ENCODE measurements at regions of chr13 and their contacts with region 1.

Region 1: DNA sequence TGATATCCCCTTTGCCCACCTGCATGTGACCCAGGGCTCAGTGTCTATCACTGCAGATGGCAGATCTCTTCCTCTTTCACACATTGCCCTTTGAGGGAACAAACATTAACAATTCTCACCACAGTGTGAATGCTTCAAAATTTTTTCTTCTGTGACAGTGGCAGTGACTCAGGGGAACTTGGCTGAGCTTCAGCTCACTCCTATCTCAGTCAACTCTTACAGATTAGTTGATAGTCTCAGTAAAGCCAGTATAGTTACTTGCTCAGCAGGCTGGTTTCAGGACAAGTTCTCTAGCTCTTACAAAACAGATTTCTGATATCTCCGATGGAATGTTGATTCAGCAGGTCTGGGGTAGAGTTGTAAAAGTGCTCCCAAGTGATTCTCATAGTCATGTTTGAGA is 166.9 kb downstream of the DLEU7 start:
- DNase-seq: peak in 2 of 3 donors; percentile 11 to 22
- H3K4me3 ChIP-seq: no peak overlapping the region
- H3K4me3 Mint-ChIP-seq: no peak overlapping the region
- H3K27ac ChIP-seq: no peak overlapping the region
- H3K27ac Mint-ChIP-seq: no peak overlapping the region
- H3K4me1 ChIP-seq: peaks cover 2 to 8% of the 10 kb centered on the region in 2 donors
- H3K4me1 Mint-ChIP-seq: peaks cover 19% of the 10 kb centered on the region
- H3K27me3 ChIP-seq: peaks cover 0 to 2% of the 10 kb centered on the region in 2 donors
- H3K27me3 Mint-ChIP-seq: peaks cover 0 to 1% (median 0%) of the 10 kb centered on the region in 3 donors
- CTCF ChIP-seq: no peak

Region 2: GRCh38 chr13:50589139-50589538 is 87.5 kb before region 1 on chr13:
- intact Hi-C with region 1: loop called in 1 of 2 experiments (anchors 10 kb)
- DNase-seq: no peak
- H3K4me3 ChIP-seq: no peak overlapping the region
- H3K4me3 Mint-ChIP-seq: no peak overlapping the region
- H3K27ac ChIP-seq: no peak overlapping the region
- H3K27ac Mint-ChIP-seq: no peak overlapping the region
- H3K4me1 ChIP-seq: peaks cover 14% of the 10 kb centered on the region in 2 donors
- H3K4me1 Mint-ChIP-seq: peaks cover 13% of the 10 kb centered on the region
- H3K27me3 ChIP-seq: no peaks in the 10 kb centered on the region
- H3K27me3 Mint-ChIP-seq: peaks cover 0 to 3% (median 3%) of the 10 kb centered on the region in 3 donors
- CTCF ChIP-seq: no peak